CD4-positive, alpha-beta memory T cell (primary cell): ENCODE measurements at regions of chr19 and their contacts with region 1.

Region 1: DNA sequence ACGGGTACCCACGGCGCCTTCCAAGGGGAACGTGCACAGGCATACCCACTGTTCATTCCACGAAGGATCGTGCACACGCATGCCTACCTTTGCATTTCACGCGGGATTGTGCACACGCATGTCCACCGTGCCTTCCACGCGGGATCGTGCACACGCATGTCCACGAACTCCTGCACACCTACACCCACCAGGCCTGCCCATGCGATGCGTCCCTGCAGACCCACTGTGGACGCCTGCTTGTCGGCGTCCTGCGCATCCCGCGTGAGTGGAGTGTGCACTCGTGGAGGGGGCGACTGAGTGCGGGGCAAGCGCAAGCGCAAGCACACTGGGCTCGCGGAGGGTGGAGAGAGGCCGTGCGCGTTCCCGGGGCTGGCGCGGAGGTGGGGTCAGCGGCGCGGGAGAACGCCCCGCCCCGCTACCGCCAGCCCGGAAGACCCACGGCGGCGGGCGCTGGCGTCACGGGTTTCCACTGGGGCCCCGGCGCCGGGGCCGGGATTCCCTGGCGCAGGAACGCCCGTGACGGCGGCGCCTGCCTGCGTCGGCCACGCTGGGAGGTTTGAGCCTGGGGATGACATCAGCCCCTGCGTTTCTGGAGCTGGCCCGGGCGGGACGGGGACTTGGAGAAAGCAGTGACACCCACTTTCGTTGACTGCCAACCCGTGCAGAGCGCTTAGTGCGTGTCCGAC is 18.7 kb downstream of the GADD45B start:
- DNase-seq: peak; percentile 31 to 80 (median 33)
- H3K4me3 ChIP-seq: peak overlapping the region; percentile 34 to 77
- H3K4me3 Mint-ChIP-seq: peak overlapping the region; percentile 70 to 85 (median 80)
- H3K27ac ChIP-seq: peak overlapping the region; percentile 56
- H3K27ac Mint-ChIP-seq: peak overlapping the region in 6 of 7 donors; percentile 43 to 74 (median 64)
- H3K4me1 ChIP-seq: peaks cover 23% of the 10 kb centered on the region
- H3K4me1 Mint-ChIP-seq: peaks cover 4 to 35% (median 16%) of the 10 kb centered on the region in 4 donors
- H3K27me3 ChIP-seq: peaks cover 11% of the 10 kb centered on the region
- H3K27me3 Mint-ChIP-seq: peaks cover 11 to 14% of the 10 kb centered on the region in 2 donors

Region 2: GRCh38 chr19:2552859-2553258 is 58.3 kb after region 1 on chr19:
- CTCF ChIA-PET with region 1: no interaction called
- POLR2A ChIA-PET with region 1: interaction called, 11 read pairs
- intact Hi-C with region 1: no loop called
- DNase-seq: peak; percentile 74 to 84 (median 80)
- H3K4me3 ChIP-seq: peak overlapping the region; percentile 36 to 46
- H3K4me3 Mint-ChIP-seq: peak overlapping the region; percentile 52 to 93 (median 82)
- H3K27ac ChIP-seq: peak overlapping the region; percentile 12
- H3K27ac Mint-ChIP-seq: peak overlapping the region; percentile 67 to 96 (median 78)
- H3K4me1 ChIP-seq: peaks cover 24% of the 10 kb centered on the region
- H3K4me1 Mint-ChIP-seq: peaks cover 9 to 18% (median 14%) of the 10 kb centered on the region in 4 donors
- H3K27me3 ChIP-seq: no peaks in the 10 kb centered on the region
- H3K27me3 Mint-ChIP-seq: no peaks in the 10 kb centered on the region